K562 (cell line): ENCODE measurements at regions of chr7 and their contacts with region 1.

Region 1: DNA sequence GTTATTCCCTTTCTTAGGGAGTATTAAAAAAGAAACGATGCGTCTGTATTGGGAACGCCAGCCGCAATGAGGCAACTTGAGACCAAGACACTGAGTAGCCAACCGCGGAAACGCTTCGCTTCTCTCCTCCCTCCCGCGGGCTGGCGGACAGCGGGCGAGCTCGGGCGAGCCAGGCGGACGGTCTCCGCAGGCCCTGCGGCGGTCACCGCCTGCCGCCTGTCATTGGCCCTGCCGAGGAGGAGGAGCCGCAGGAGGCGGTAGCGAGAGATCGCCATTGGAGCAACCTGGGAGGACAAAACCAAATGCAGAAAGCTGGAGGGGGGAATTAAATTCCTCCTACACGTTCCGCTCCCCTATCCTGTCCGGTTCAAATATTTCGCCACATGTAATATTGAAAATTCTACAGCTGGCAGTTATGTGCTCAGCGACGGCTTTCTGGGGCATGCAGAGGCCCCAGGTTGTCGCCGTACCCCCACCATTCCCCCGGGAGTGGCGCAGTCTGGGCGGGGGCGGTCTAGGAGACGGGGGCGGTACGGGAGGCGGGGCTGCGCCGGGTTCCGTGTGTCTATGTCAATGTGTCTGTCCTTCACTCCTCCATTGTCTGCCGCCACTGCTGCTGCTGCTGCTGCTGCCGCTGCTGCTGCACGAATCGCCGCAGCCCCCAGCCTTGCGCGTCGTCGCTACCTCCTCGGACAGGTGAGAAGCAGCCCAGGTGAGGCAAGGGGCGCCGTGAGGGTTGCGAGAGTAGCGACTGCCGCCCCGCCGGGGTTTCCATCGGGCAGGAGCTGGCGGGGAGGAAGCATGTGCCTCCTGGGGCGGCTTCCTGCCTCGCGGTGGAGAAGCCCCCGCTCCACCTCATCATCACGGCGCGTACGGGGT is at the starts of genes ANKMY2 and BZW2:
- DNase-seq: peak; percentile 92 to 96 (median 94)
- ATAC-seq: peak; percentile 89
- H3K4me3 ChIP-seq: peak within 1 kb of the TSS; percentile 90
- H3K27ac ChIP-seq: peak within 1 kb of the TSS; percentile 96
- H3K4me1 ChIP-seq: peaks cover 8 to 36% of the 10 kb centered on the region in 2 experiments; a peak in 4 of 5 replicates
- H3K27me3 ChIP-seq: no peaks in the 10 kb centered on the region
- CTCF ChIP-seq: no peak
- EP300 ChIP-seq: 0 out of 2 replicates have a peak, but pooled peaks have one; percentile 16
- POLR2A ChIP-seq: peak; percentile 99
- RAD21 ChIP-seq: no peak; a peak in 1 of 4 replicates
- polyA plus RNA-seq, gene ANKMY2: 38.9 to 70.3 TPM
- polyA plus RNA-seq, gene BZW2: 251 to 316 TPM

Region 2: GRCh38 chr7:15692501-15693020 is 953.3 kb before region 1 on chr7:
- CTCF ChIA-PET with region 1: no interaction called
- POLR2A ChIA-PET with region 1: no interaction called
- in situ Hi-C with region 1: no loop called
- intact Hi-C with region 1: no loop called
- DNase-seq: no peak
- ATAC-seq: no peak
- H3K4me3 ChIP-seq: no peak overlapping the region
- H3K27ac ChIP-seq: no peak overlapping the region
- H3K4me1 ChIP-seq: no peaks in the 10 kb centered on the region
- H3K27me3 ChIP-seq: no peaks in the 10 kb centered on the region
- CTCF ChIP-seq: no peak
- EP300 ChIP-seq: no peak
- POLR2A ChIP-seq: no peak
- RAD21 ChIP-seq: no peak

Region 3: GRCh38 chr7:16260236-16260728 is 385.6 kb before region 1 on chr7:
- CTCF ChIA-PET with region 1: no interaction called
- POLR2A ChIA-PET with region 1: interaction called, 3 read pairs
- in situ Hi-C with region 1: no loop called
- intact Hi-C with region 1: loop called (anchors 2 kb)
- DNase-seq: peak; percentile 25 to 75 (median 32)
- ATAC-seq: peak; percentile 60
- H3K4me3 ChIP-seq: no peak overlapping the region
- H3K27ac ChIP-seq: peak overlapping the region; percentile 93
- H3K4me1 ChIP-seq: peaks cover 0 to 22% of the 10 kb centered on the region in 2 experiments; a peak in 3 of 5 replicates
- H3K27me3 ChIP-seq: no peaks in the 10 kb centered on the region
- CTCF ChIP-seq: no peak
- EP300 ChIP-seq: peak; percentile 57
- POLR2A ChIP-seq: no peak
- RAD21 ChIP-seq: no peak

Region 4: DNA sequence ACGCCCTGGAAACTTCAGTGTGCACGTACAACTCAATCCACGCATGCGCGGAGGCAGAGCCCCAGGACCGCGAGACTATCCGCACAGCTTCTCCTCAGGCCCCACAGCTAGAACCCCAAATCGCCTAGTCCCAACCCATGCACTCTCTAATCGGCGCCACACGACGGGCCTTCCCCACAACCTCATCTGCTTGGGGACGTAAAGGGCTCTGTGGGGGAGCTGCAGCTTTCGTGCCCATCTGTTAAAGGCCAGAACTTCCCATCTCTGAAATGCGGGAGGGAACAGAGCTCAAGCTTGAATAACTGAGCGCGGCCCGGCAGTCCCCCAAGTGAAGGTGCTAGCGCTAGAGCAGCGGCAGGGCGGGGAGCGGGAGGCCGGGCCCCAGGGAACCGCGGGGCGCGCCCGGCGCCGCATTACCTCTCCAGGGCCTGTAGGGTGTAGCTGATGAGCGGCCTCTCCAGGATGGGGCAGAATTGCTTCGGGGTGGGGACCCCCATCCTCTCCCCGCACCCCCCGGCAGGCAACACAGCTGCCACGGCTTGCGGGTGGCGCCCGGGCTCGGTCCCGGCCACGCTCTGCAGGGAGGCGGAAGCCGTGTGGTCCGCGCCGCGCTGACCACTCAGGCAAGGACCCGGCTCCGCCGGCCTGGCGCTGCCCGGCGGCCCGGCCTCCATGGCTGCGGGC is 225.0 kb before region 1 on chr7:
- CTCF ChIA-PET with region 1: no interaction called
- POLR2A ChIA-PET with region 1: interaction called, 3 read pairs
- in situ Hi-C with region 1: no loop called
- intact Hi-C with region 1: loop called (anchors 5 kb)
- DNase-seq: peak; percentile 85 to 97 (median 90)
- ATAC-seq: peak; percentile 87
- H3K4me3 ChIP-seq: peak overlapping the region; percentile 66
- H3K27ac ChIP-seq: peak overlapping the region; percentile 97
- H3K4me1 ChIP-seq: peaks cover 23 to 46% of the 10 kb centered on the region in 2 experiments
- H3K27me3 ChIP-seq: no peaks in the 10 kb centered on the region
- CTCF ChIP-seq: peak; percentile 29 to 73 (median 36); a peak in 5 of 6 replicates
- EP300 ChIP-seq: no peak
- POLR2A ChIP-seq: peak; percentile 96
- RAD21 ChIP-seq: peak; percentile 30 to 32; a peak in 3 of 4 replicates

Region 5: DNA sequence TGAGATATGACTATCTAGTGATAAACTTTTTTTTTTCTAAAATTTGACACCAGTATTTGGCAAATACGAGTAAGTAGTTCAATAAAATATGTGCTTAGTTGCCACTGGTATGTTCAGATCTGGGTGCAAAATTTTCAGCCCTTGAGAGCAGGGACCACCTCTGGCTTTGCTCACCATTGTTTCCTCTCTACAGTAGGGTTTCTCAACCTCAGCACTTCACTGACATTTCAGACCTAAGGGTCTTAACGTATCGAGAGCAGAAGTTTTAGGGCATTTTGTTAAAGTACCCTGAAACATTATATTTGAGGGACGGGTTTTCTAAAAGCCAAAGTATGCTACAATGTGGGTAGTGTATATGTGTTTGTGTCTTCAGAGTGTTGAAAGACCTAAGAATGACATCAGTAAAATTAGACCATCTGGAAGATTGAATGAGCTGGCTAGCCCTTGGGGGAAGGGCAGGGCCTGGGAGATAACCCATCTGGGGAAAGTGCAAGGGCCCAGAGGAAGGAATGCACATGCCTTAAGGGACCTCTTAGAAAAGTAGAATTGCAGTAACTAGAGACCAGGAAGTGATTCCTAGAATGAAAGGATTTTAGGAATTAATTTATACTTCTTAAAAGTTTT is 11.9 kb after region 1 on chr7:
- CTCF ChIA-PET with region 1: no interaction called
- POLR2A ChIA-PET with region 1: interaction called, 64 read pairs
- in situ Hi-C with region 1: no loop called
- intact Hi-C with region 1: loop called (anchors 2 kb)
- DNase-seq: peak; percentile 55 to 91 (median 74)
- ATAC-seq: peak; percentile 84
- H3K4me3 ChIP-seq: no peak overlapping the region
- H3K27ac ChIP-seq: peak overlapping the region; percentile 82
- H3K4me1 ChIP-seq: peaks cover 11 to 54% of the 10 kb centered on the region in 2 experiments
- H3K27me3 ChIP-seq: no peaks in the 10 kb centered on the region
- CTCF ChIP-seq: 0 out of 6 replicates have a peak, but pooled peaks of 1 of the 3 experiments have one; percentile 24
- EP300 ChIP-seq: peak; percentile 86
- POLR2A ChIP-seq: no peak
- RAD21 ChIP-seq: 0 out of 4 replicates have a peak, but pooled peaks of 1 of the 2 experiments have one; percentile 8

Region 6: DNA sequence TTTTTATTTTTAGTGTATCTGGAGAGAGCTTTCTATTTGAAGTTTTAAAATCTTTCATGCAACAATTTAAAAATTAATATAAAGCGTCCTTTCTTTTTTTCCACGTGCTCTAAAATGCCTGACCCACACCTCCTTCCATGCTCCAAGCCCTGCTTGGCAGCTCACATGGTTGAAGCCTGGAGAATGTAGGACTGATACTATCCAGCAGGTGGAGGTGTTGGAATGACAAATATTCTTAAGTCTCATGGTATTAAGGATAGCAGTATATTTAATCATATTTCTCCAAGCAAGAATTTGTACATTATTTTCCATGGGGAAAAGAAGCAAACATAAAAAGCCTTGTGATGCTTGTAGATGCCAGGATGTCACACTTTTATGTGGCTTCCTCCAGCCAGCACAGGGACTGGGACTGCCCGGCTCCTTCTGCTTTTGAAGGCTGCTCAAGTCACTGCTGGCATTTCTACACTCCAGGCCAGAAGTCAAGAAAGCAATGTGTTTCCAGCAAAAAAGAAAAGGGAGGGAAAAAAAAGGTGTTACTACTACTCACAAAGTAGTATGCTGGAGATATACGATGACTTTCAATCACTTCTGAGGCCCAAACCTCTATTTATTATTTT is 49.9 kb after region 1 on chr7:
- CTCF ChIA-PET with region 1: no interaction called
- POLR2A ChIA-PET with region 1: no interaction called
- in situ Hi-C with region 1: no loop called
- intact Hi-C with region 1: loop called (anchors 5 kb)
- DNase-seq: peak; percentile 35 to 63 (median 46)
- ATAC-seq: peak; percentile 94
- H3K4me3 ChIP-seq: no peak overlapping the region
- H3K27ac ChIP-seq: no peak overlapping the region
- H3K4me1 ChIP-seq: no peaks in the 10 kb centered on the region
- H3K27me3 ChIP-seq: no peaks in the 10 kb centered on the region
- CTCF ChIP-seq: peak; percentile 46 to 69 (median 59)
- EP300 ChIP-seq: no peak
- POLR2A ChIP-seq: no peak
- RAD21 ChIP-seq: peak; percentile 65 to 67

Region 7: GRCh38 chr7:16753102-16753931 is 107.5 kb after region 1 on chr7 and contains the start of gene TSPAN13:
- CTCF ChIA-PET with region 1: no interaction called
- POLR2A ChIA-PET with region 1: no interaction called
- in situ Hi-C with region 1: no loop called
- intact Hi-C with region 1: loop called (anchors 5 kb)
- DNase-seq: peak; percentile 93 to 96 (median 94)
- ATAC-seq: peak; percentile 93
- H3K4me3 ChIP-seq: peak within 1 kb of the TSS; percentile 72
- H3K27ac ChIP-seq: peak within 1 kb of the TSS; percentile 63
- H3K4me1 ChIP-seq: peaks cover 9 to 11% of the 10 kb centered on the region in 2 experiments; a peak in 4 of 5 replicates
- H3K27me3 ChIP-seq: no peaks in the 10 kb centered on the region
- CTCF ChIP-seq: no peak
- EP300 ChIP-seq: no peak
- POLR2A ChIP-seq: peak; percentile 51; the same call in 1 of the 2 replicates
- RAD21 ChIP-seq: no peak; a peak in 1 of 4 replicates
- polyA plus RNA-seq, gene TSPAN13: 7.8 to 9.8 TPM